Activated T-helper 2 cell treated with anti-CD3 and anti-CD28 coated beads, Interferon-gamma antibody, Interleukin-2, Interleukin-4, amounts not matched to agents 10 μg/mL and 5 μg/mL and 100 μg/mL, durations not matched to agents 14 hours and 24 hours and 36 hours (primary cell): ENCODE measurements at regions of chr2 and their contacts with region 1.

Region 1: DNA sequence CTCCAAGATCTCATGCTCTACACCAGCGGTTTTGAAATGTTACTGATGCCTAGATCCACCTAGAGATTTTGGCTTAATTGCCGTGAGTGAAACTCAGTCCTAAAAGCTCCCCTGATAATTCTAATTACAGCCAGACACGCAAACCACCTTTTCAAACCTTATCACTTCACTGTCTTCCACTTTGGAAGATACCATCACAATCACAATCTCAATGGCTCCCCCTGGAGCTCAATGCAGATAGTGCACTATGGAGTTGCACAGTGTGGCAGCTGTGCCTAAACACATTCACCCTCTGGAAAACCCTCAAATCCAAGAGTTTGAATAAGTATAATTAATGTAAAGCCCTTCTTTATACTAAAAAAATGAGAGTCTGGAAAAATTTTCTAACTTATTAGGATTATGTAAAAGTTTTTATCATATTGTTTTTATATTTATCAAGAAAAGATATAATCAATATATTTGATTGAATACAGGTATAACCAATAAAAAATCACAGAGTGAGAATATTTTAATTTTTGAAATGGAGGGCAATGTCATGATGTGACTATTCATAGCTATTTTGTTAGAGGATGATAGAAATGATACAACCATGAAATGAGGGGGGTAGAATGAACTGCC is 102.9 kb upstream of the SLC8A1 start:
- DNase-seq: peak; percentile 37
- H3K4me3 Mint-ChIP-seq: no peak overlapping the region
- H3K27ac Mint-ChIP-seq: no peak overlapping the region
- H3K4me1 Mint-ChIP-seq: peaks cover 2% of the 10 kb centered on the region
- H3K27me3 Mint-ChIP-seq: peaks cover 7% of the 10 kb centered on the region

Region 2: GRCh38 chr2:39968037-39968436 is 586.7 kb before region 1 on chr2:
- intact Hi-C with region 1: no loop called
- DNase-seq: no peak
- H3K4me3 Mint-ChIP-seq: no peak overlapping the region
- H3K27ac Mint-ChIP-seq: no peak overlapping the region
- H3K4me1 Mint-ChIP-seq: peaks cover 3% of the 10 kb centered on the region
- H3K27me3 Mint-ChIP-seq: no peaks in the 10 kb centered on the region

Region 3: GRCh38 chr2:40244675-40245074 is 310.1 kb before region 1 on chr2:
- intact Hi-C with region 1: loop called (anchors 10 kb)
- DNase-seq: no peak
- H3K4me3 Mint-ChIP-seq: no peak overlapping the region
- H3K27ac Mint-ChIP-seq: no peak overlapping the region
- H3K4me1 Mint-ChIP-seq: peaks cover 8% of the 10 kb centered on the region
- H3K27me3 Mint-ChIP-seq: no peaks in the 10 kb centered on the region

Region 4: DNA sequence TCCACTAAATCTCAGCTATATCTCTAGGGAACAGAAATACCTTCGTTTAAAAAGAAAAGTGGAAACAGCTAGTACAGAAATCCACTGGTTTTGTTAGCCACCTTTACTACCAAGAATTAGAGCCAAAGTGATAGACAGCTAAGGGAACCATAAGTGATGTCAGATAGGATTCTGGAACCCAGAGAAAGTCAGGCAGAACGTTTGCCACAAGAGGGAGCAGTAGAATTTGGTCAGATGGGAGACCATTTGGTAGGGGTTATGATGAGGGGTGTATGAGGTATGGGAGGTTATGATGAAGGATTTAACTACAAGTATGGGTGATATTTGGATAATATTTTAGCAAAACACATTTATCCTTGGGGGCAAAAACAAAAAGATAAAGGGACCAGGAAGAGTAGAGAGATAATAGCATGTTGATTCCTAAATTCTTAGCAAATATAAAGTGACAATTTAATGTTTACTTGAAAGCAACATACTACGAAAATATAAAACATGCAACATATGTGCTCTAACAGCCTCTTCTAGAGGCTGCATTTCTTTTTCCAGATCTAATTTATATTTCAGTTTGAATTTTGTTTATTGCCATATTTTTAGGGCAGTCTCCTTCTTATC is 106.2 kb before region 1 on chr2:
- intact Hi-C with region 1: loop called (anchors 5 kb)
- DNase-seq: no peak
- H3K4me3 Mint-ChIP-seq: no peak overlapping the region
- H3K27ac Mint-ChIP-seq: no peak overlapping the region
- H3K4me1 Mint-ChIP-seq: peaks cover 25% of the 10 kb centered on the region
- H3K27me3 Mint-ChIP-seq: peaks cover 38% of the 10 kb centered on the region